T-cell (primary cell): ENCODE measurements at regions of chr17 and their contacts with region 1.

Region 1: GRCh38 chr17:64081802-64082799 is 47.8 kb downstream of the ERN1 start:
- DNase-seq: peak in 22 of 35 experiments; percentile 6 to 65 (median 22)
- ATAC-seq: peak; percentile 83 to 90 (median 86)
- H3K4me3 ChIP-seq: peak overlapping the region in 1 of 2 donors; percentile 12
- H3K4me3 Mint-ChIP-seq: peak overlapping the region in 2 of 3 donors; percentile 35 to 67
- H3K27ac ChIP-seq: peak overlapping the region; percentile 68
- H3K27ac Mint-ChIP-seq: no peak overlapping the region
- H3K4me1 ChIP-seq: peaks cover 42 to 50% of the 10 kb centered on the region in 2 experiments
- H3K4me1 Mint-ChIP-seq: peaks cover 14 to 31% (median 17%) of the 10 kb centered on the region in 3 donors
- H3K27me3 ChIP-seq: no peaks in the 10 kb centered on the region
- H3K27me3 Mint-ChIP-seq: no peaks in the 10 kb centered on the region

Region 2: GRCh38 chr17:64063766-64064224 is 18.3 kb before region 1 on chr17:
- CTCF ChIA-PET with region 1: interaction called in 1 of 2 experiments, 10 read pairs
- POLR2A ChIA-PET with region 1: no interaction called
- DNase-seq: peak; percentile 22 to 71 (median 53)
- ATAC-seq: peak; percentile 49 to 76 (median 62)
- H3K4me3 ChIP-seq: peak overlapping the region in 1 of 2 donors; percentile 51
- H3K4me3 Mint-ChIP-seq: peak overlapping the region in 2 of 3 donors; percentile 66 to 86
- H3K27ac ChIP-seq: peak overlapping the region; percentile 68
- H3K27ac Mint-ChIP-seq: peak overlapping the region in 1 of 2 donors; percentile 96
- H3K4me1 ChIP-seq: peaks cover 8 to 80% of the 10 kb centered on the region in 2 experiments
- H3K4me1 Mint-ChIP-seq: peaks cover 6 to 98% (median 69%) of the 10 kb centered on the region in 3 donors
- H3K27me3 ChIP-seq: no peaks in the 10 kb centered on the region
- H3K27me3 Mint-ChIP-seq: no peaks in the 10 kb centered on the region

Region 3: DNA sequence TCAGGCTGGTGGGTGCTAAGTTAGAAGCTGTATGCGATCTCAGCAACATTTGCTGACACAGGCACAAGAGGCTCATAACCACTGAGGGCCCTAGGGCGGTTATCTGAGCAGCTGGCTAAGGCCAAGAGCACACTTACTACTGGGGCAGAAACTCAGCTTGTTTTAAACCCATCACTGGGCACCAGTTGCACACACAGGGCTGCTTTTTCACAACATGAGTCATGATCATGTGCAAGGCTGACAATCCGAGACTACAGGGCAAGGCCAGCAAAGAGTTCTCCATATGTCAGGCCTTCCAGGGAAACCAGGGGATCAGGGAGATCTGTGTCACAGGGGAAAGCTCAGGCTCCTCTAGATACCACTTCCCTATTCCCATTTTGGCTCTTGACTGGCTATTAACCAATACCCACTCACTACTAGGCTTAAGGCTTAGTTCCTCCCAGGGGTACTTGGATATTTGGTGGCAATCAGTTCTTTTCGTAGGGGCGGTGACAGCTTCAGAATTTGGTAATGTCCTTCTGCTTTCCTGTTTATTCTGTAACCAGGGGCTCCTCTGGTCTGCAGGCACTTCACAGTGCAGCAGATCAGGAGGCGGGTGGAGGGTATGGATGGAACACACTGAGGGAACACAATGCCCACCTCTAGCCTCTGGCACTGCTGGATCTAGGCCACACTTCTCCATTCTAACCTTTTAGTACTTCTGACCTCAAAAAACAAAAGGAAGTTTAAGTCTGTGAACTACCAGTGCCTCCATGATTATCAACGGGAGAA is 92.8 kb after region 1 on chr17:
- CTCF ChIA-PET with region 1: no interaction called
- POLR2A ChIA-PET with region 1: no interaction called
- DNase-seq: peak in 1 of 35 experiments; percentile 6
- ATAC-seq: no peak
- H3K4me3 ChIP-seq: no peak overlapping the region
- H3K4me3 Mint-ChIP-seq: no peak overlapping the region
- H3K27ac ChIP-seq: no peak overlapping the region
- H3K27ac Mint-ChIP-seq: no peak overlapping the region
- H3K4me1 ChIP-seq: no peaks in the 10 kb centered on the region
- H3K4me1 Mint-ChIP-seq: no peaks in the 10 kb centered on the region
- H3K27me3 ChIP-seq: no peaks in the 10 kb centered on the region
- H3K27me3 Mint-ChIP-seq: no peaks in the 10 kb centered on the region

Region 4: DNA sequence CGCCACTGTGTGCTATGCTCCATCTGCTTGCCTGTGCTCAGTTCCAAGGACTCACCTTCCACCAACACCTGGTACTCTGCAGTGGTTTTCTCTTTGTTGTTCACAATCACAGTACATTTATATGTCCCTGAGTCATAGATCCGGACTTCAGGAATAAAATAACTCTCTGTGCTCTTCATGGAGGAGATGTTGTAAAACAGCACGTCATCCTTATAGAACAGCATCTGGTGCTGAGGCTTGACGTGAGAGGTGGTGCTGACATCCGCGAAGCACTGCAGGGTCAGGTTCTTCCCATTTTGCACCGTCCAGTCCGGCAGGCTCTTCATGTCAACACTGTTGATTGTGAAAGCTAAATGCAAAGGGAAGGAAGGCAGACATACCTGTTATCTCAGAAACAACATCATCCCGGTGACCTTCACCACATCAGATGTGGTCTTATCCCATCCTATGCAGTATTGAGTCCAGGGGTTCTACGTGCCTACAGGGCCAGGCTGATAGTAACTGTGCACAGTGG is 295.7 kb after region 1 on chr17:
- CTCF ChIA-PET with region 1: no interaction called
- POLR2A ChIA-PET with region 1: interaction called in 1 of 2 experiments, 11 read pairs
- DNase-seq: no peak
- ATAC-seq: no peak
- H3K4me3 ChIP-seq: no peak overlapping the region
- H3K4me3 Mint-ChIP-seq: no peak overlapping the region
- H3K27ac ChIP-seq: no peak overlapping the region
- H3K27ac Mint-ChIP-seq: no peak overlapping the region
- H3K4me1 ChIP-seq: no peaks in the 10 kb centered on the region
- H3K4me1 Mint-ChIP-seq: peaks cover 0 to 13% (median 11%) of the 10 kb centered on the region in 3 donors
- H3K27me3 ChIP-seq: no peaks in the 10 kb centered on the region
- H3K27me3 Mint-ChIP-seq: no peaks in the 10 kb centered on the region